ENCODE measurements at regions of chr10 and their contacts with region 1.

Region 1: DNA sequence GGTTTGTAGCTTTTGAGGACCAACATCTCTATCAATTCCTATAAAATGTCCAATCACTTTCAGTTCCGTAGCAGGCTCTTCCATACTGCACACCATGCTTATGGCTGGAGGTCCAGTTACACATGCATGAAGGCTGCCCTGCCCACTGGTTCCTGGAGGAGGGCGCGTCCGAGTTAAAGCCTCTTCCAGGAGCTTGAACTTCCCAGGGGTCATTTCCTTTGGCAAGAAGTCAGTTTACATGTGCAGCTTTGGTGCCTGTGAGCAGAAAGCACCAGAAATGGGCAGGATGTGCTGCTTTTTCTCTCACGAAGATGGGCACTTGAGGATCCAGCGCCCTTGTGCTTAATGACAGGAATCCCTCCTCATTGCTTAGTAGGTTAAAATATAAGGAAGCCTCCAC is 17.6 kb upstream of the PHYH start:
- DNase-seq: no peak
- H3K4me3 ChIP-seq: no peak overlapping the region
- H3K27ac ChIP-seq: no peak overlapping the region
- H3K4me1 ChIP-seq: peaks cover 0 to 2% (median 0%) of the 10 kb centered on the region in 4 experiments; a peak in 1 of 7 replicates
- H3K27me3 ChIP-seq: no peaks in the 10 kb centered on the region
- CTCF ChIP-seq: no peak
- EP300 ChIP-seq: no peak
- POLR2A ChIP-seq: peak in 1 of 2 experiments; percentile 40; a peak in 1 of 3 replicates
- RAD21 ChIP-seq: no peak

Region 2: GRCh38 chr10:13213163-13213562 is 104.3 kb before region 1 on chr10:
- CTCF ChIA-PET with region 1: no interaction called
- POLR2A ChIA-PET with region 1: no interaction called
- DNase-seq: no peak
- H3K4me3 ChIP-seq: no peak overlapping the region
- H3K27ac ChIP-seq: no peak overlapping the region
- H3K4me1 ChIP-seq: peaks cover 0 to 4% (median 0%) of the 10 kb centered on the region in 4 experiments; a peak in 1 of 7 replicates
- H3K27me3 ChIP-seq: no peaks in the 10 kb centered on the region
- CTCF ChIP-seq: no peak
- EP300 ChIP-seq: no peak
- POLR2A ChIP-seq: no peak
- RAD21 ChIP-seq: no peak; a peak in 1 of 4 replicates

Region 3: GRCh38 chr10:13327534-13327933 is 10.1 kb after region 1 on chr10:
- CTCF ChIA-PET with region 1: interaction called, 3 read pairs
- POLR2A ChIA-PET with region 1: interaction called, 34 read pairs
- DNase-seq: no peak
- H3K4me3 ChIP-seq: no peak overlapping the region
- H3K27ac ChIP-seq: no peak overlapping the region
- H3K4me1 ChIP-seq: peaks cover 4 to 8% (median 5%) of the 10 kb centered on the region in 4 experiments; a peak in 6 of 7 replicates
- H3K27me3 ChIP-seq: no peaks in the 10 kb centered on the region
- CTCF ChIP-seq: no peak
- EP300 ChIP-seq: no peak
- POLR2A ChIP-seq: no peak
- RAD21 ChIP-seq: no peak

Region 4: GRCh38 chr10:13340626-13341376 is 23.3 kb after region 1 on chr10:
- CTCF ChIA-PET with region 1: interaction called, 4 read pairs
- POLR2A ChIA-PET with region 1: interaction called, 34 read pairs
- DNase-seq: no peak
- H3K4me3 ChIP-seq: no peak overlapping the region
- H3K27ac ChIP-seq: no peak overlapping the region
- H3K4me1 ChIP-seq: peaks cover 3 to 24% (median 12%) of the 10 kb centered on the region in 4 experiments; a peak in 6 of 7 replicates
- H3K27me3 ChIP-seq: no peaks in the 10 kb centered on the region
- CTCF ChIP-seq: no peak
- EP300 ChIP-seq: no peak
- POLR2A ChIP-seq: no peak
- RAD21 ChIP-seq: no peak

Measured in H1 (cell line).